ENCODE measurements at regions of chr6 and their contacts with region 1.

Region 1: DNA sequence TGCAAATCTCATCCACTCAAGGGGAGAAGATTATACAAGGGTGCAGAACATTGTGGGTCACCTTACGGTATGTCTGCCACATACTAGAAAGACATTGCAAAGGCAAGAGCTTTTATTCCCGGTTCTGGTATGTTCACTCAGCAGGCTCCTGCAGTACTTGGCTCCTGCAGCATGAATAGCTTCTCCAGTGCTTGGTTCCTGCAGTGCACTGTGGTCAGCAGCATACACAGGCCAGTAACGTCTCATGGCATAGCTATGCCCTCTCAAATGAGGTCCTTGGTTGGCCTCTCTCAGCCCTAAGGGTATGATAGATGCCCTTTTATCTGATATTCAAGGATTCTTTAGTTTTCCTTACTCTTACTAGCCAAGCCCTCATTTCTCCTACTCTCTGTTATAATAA is 12.6 kb downstream of the TCP11 start:
- DNase-seq: no peak
- H3K4me3 Mint-ChIP-seq: no peak overlapping the region
- H3K27ac Mint-ChIP-seq: no peak overlapping the region
- H3K4me1 Mint-ChIP-seq: peaks cover 5% of the 10 kb centered on the region
- H3K27me3 Mint-ChIP-seq: peaks cover 29% of the 10 kb centered on the region
- CTCF ChIP-seq: no peak

Region 2: DNA sequence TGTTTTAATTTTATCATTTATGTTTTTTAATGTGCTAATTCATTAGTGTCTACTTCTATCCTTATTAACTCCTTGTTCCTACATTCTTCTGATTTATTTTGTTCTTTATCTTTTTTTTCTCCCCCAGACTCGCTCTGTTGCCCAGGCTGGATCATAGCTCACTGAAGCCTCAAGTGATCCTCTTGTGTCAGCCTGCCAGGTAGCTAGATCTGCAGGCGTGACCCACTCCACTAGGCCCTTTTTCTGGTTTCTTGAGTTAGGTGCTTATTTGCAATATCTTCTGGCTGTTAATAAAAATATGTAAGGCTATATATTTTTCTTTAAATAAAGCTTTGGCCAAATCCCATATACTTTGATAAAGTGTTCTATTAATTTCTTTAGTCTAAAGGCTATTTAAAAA is 243.5 kb before region 1 on chr6:
- CTCF ChIA-PET with region 1: no interaction called
- intact Hi-C with region 1: no loop called
- DNase-seq: no peak
- H3K4me3 Mint-ChIP-seq: no peak overlapping the region
- H3K27ac Mint-ChIP-seq: no peak overlapping the region
- H3K4me1 Mint-ChIP-seq: peaks cover 6% of the 10 kb centered on the region
- H3K27me3 Mint-ChIP-seq: no peaks in the 10 kb centered on the region
- CTCF ChIP-seq: no peak

Region 3: GRCh38 chr6:35096129-35096862 is 32.2 kb before region 1 on chr6:
- CTCF ChIA-PET with region 1: no interaction called
- intact Hi-C with region 1: loop called (anchors 1 kb)
- DNase-seq: no peak
- H3K4me3 Mint-ChIP-seq: no peak overlapping the region
- H3K27ac Mint-ChIP-seq: peak overlapping the region; percentile 22
- H3K4me1 Mint-ChIP-seq: peaks cover 21% of the 10 kb centered on the region
- H3K27me3 Mint-ChIP-seq: no peaks in the 10 kb centered on the region
- CTCF ChIP-seq: no peak

Measured in Calu3 (cell line).